Mammary epithelial cell (primary cell): ENCODE measurements at regions of chr2 and their contacts with region 1.

Region 1: GRCh38 chr2:197515739-197516392 is at the start of gene MOB4:
- DNase-seq: peak; percentile 93
- H3K4me3 ChIP-seq: peak within 1 kb of the TSS; percentile 86 to 93 (median 93)
- H3K27ac ChIP-seq: peak within 1 kb of the TSS; percentile 69
- H3K4me1 ChIP-seq: peaks cover 9% of the 10 kb centered on the region
- H3K27me3 ChIP-seq: no peaks in the 10 kb centered on the region
- CTCF ChIP-seq: no peak
- total RNA-seq, gene MOB4: 23.6 to 28.8 TPM

Region 2: DNA sequence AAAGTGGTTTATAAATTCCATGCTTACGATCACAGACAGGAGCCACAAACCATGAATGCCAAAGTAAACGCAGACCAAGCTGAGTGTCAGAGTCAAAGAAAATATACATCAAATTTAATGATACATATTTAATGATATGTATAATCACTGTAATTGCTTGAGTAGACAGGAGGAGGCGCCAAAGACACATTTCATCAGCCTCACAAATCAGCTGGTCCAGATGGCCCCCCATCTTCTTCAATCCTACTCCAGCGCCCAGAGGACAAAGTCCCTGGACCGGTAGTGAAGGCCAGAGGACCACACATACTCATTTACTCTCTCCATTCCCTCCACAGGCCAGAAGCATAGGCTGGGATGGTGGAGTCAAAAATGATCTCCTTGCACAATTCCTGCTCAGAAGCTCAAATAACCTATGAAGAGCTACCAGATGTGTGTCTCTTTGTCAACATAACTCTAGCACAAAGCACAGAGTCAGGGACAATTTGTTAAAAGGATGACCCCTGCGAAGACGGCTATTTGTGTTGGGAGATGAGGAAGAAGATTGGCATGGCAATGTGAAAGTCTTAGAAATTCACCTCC is 440.0 kb before region 1 on chr2:
- CTCF ChIA-PET with region 1: no interaction called
- dilution Hi-C with region 1: no loop called
- in situ Hi-C with region 1: no loop called
- intact Hi-C with region 1: no loop called
- DNase-seq: no peak
- H3K4me3 ChIP-seq: no peak overlapping the region
- H3K27ac ChIP-seq: no peak overlapping the region
- H3K4me1 ChIP-seq: no peaks in the 10 kb centered on the region
- H3K27me3 ChIP-seq: no peaks in the 10 kb centered on the region
- CTCF ChIP-seq: peak; percentile 40 to 41

Region 3: GRCh38 chr2:197453161-197453914 is 62.5 kb before region 1 on chr2 and contains the start of gene COQ10B:
- CTCF ChIA-PET with region 1: no interaction called
- dilution Hi-C with region 1: no loop called
- in situ Hi-C with region 1: no loop called
- intact Hi-C with region 1: loop called (anchors 2 kb)
- DNase-seq: peak; percentile 99
- H3K4me3 ChIP-seq: peak within 1 kb of the TSS; percentile 80 to 100 (median 84)
- H3K27ac ChIP-seq: peak within 1 kb of the TSS; percentile 98
- H3K4me1 ChIP-seq: peaks cover 13% of the 10 kb centered on the region
- H3K27me3 ChIP-seq: no peaks in the 10 kb centered on the region
- CTCF ChIP-seq: peak in 1 of 2 donors; percentile 37
- total RNA-seq, gene COQ10B: 23.9 to 40.0 TPM

Region 4: DNA sequence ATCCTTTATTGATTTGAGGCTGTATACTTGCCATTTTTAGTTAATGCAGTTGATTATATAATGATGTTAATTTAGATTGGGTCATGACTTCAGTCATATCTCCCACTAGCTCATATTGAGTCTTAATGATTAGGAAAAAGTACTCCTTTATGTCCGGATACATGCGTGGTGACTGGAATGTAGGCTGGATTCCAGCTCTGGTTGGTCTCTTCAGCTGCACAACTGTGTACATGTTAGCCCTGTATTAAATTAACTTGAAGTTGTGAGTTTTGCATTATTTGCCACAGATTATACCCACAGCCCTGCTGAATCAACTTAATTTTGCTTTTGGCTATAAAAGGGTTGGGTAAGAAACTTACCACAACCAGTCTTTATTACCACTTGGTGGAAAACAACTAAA is 22.5 kb after region 1 on chr2:
- CTCF ChIA-PET with region 1: interaction called, 17 read pairs
- dilution Hi-C with region 1: no loop called
- in situ Hi-C with region 1: no loop called
- intact Hi-C with region 1: no loop called
- DNase-seq: no peak
- H3K4me3 ChIP-seq: no peak overlapping the region
- H3K27ac ChIP-seq: no peak overlapping the region
- H3K4me1 ChIP-seq: no peaks in the 10 kb centered on the region
- H3K27me3 ChIP-seq: no peaks in the 10 kb centered on the region
- CTCF ChIP-seq: no peak

Region 5: GRCh38 chr2:197599285-197599965 is 83.6 kb after region 1 on chr2:
- CTCF ChIA-PET with region 1: no interaction called
- dilution Hi-C with region 1: no loop called
- in situ Hi-C with region 1: no loop called
- intact Hi-C with region 1: loop called (anchors 5 kb)
- DNase-seq: peak; percentile 54
- H3K4me3 ChIP-seq: peak overlapping the region in 1 of 3 experiments; percentile 24
- H3K27ac ChIP-seq: no peak overlapping the region
- H3K4me1 ChIP-seq: peaks cover 6% of the 10 kb centered on the region
- H3K27me3 ChIP-seq: peaks cover 1% of the 10 kb centered on the region
- CTCF ChIP-seq: peak; percentile 44 to 66

Region 6: GRCh38 chr2:197615016-197615652 is 99.3 kb after region 1 on chr2:
- CTCF ChIA-PET with region 1: no interaction called
- dilution Hi-C with region 1: loop called (anchors 5 kb)
- in situ Hi-C with region 1: no loop called
- intact Hi-C with region 1: loop called (anchors 1 kb)
- DNase-seq: peak; percentile 80
- H3K4me3 ChIP-seq: no peak overlapping the region
- H3K27ac ChIP-seq: no peak overlapping the region
- H3K4me1 ChIP-seq: peaks cover 15% of the 10 kb centered on the region
- H3K27me3 ChIP-seq: no peaks in the 10 kb centered on the region
- CTCF ChIP-seq: peak; percentile 69 to 95

Region 7: DNA sequence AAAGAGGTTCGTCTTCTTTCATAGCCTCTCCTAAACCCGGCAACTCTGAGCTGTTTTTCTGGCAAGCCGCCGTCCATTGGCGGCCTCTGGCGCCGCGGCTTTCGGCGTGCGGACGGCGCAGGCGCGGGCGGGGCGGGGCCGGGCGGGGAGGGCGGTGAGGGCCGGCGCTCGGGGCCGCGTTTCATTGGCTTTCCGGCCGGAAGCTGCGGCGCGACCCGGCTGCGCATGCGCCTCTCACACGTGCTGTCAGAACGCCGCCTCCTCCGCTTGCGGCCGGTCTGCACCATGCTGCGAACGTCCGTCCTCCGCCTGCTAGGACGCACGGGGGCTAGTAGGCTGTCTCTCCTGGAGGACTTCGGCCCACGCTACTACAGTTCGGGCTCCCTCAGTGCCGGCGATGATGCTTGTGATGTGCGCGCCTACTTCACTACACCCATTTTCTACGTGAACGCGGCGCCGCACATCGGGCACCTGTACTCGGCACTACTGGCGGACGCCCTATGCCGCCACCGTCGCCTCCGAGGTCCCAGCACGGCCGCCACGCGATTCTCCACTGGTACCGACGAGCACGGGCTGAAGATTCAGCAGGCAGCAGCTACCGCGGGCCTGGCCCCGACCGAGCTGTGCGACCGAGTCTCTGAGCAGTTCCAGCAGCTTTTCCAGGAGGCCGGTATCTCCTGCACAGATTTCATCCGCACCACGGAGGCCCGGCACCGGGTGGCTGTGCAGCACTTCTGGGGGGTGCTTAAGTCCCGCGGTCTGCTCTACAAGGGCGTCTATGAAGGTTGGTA is 189.4 kb after region 1 on chr2 and contains the start of gene MARS2:
- CTCF ChIA-PET with region 1: no interaction called
- dilution Hi-C with region 1: no loop called
- in situ Hi-C with region 1: no loop called
- intact Hi-C with region 1: loop called (anchors 5 kb)
- DNase-seq: peak; percentile 88
- H3K4me3 ChIP-seq: peak within 1 kb of the TSS; percentile 69 to 98 (median 76)
- H3K27ac ChIP-seq: peak within 1 kb of the TSS; percentile 41
- H3K4me1 ChIP-seq: peaks cover 25% of the 10 kb centered on the region
- H3K27me3 ChIP-seq: no peaks in the 10 kb centered on the region
- CTCF ChIP-seq: no peak
- total RNA-seq, gene MARS2: 10.0 to 11.2 TPM

Region 8: DNA sequence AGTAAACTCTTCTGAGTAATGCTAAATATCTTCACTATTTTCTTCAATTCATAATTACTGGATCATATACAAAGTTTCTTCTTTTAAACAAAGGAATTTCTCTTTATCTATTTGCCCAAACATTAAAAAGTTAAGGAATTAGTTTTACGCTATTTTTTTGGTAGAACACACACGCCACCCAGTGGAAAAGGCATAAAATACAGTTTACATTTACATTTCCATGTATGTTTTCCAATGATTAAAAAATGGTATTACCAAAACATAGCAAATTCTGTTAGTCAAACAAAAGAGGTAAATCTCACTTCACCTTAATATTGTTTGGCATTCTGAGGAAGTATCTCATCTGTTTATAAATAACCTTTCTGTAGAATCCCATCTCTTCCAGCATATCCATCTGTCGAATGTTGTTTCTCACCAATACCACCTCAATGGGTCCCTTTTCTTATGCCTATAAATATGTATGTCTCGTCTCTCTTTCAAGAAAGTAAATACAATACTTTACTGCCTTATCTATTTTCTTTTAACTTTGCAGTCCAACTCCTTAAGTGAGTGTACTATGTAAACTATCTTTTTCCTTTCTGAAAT is 262.0 kb after region 1 on chr2:
- CTCF ChIA-PET with region 1: no interaction called
- dilution Hi-C with region 1: no loop called
- in situ Hi-C with region 1: no loop called
- intact Hi-C with region 1: loop called (anchors 5 kb)
- DNase-seq: peak; percentile 4
- H3K4me3 ChIP-seq: no peak overlapping the region
- H3K27ac ChIP-seq: no peak overlapping the region
- H3K4me1 ChIP-seq: no peaks in the 10 kb centered on the region
- H3K27me3 ChIP-seq: no peaks in the 10 kb centered on the region
- CTCF ChIP-seq: peak; percentile 60 to 64